Heart right ventricle (tissue), 16 donors: ENCODE measurements at regions of chr9 and their contacts with region 1.

Region 1: GRCh38 chr9:3962971-3963642 is 336.8 kb downstream of the GLIS3 start:
- DNase-seq: peak in 1 of 2 donors; percentile 44
- ATAC-seq: peak in 7 of 8 donors; percentile 51 to 87 (median 64)
- H3K4me3 ChIP-seq: peak overlapping the region in 1 of 10 donors; percentile 11
- H3K27ac ChIP-seq: peak overlapping the region in 2 of 10 donors; percentile 35 to 40
- H3K4me1 ChIP-seq: peaks cover 0 to 23% (median 11%) of the 10 kb centered on the region in 9 donors
- H3K27me3 ChIP-seq: no peaks in the 10 kb centered on the region
- CTCF ChIP-seq: no peak

Region 2: DNA sequence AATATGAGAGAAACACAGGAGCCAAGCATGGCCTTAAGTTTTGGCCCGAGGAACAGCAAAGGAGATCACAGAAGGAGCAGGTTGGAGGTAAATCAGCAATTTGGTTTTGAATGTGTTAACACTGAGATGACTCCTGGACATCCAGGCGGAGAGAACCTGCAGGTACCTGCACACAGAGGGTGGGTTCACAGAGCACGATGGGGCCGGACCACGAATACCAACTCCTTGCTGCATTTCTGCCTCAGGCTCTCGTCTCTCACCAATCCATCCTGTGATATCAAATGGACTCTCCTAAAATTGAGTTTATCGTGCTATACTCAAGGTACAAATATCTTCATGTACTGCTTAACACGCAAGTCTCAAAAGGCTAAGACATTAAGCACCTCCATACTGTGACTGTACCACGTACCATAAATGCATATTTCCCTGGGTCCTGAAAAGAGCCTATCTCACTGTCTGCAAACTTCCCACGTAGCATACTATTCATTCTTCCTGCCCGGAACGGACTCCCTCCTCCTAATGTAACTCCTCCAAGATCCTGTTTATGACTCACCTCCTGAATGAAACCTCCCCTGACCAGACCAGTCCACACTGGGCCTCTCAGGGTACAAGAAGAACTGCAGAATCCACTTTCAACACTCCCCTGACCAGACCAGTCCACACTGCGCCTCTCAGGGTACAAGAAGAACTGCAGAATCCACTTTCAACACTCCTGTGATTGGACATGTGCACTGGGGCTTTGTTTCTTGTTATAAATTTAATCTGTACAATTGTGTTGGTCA is 56.5 kb before region 1 on chr9:
- intact Hi-C with region 1: no loop called
- DNase-seq: no peak
- ATAC-seq: peak in 7 of 8 donors; percentile 42 to 88 (median 69)
- H3K4me3 ChIP-seq: no peak overlapping the region
- H3K27ac ChIP-seq: peak overlapping the region in 1 of 10 donors; percentile 33
- H3K4me1 ChIP-seq: peaks cover 0 to 33% (median 0%) of the 10 kb centered on the region in 9 donors
- H3K27me3 ChIP-seq: no peaks in the 10 kb centered on the region
- CTCF ChIP-seq: no peak

Region 3: GRCh38 chr9:3924145-3924544 is 39.0 kb before region 1 on chr9:
- intact Hi-C with region 1: loop called in 1 of 10 experiments (anchors 2 kb)
- DNase-seq: no peak
- ATAC-seq: no peak
- H3K4me3 ChIP-seq: no peak overlapping the region
- H3K27ac ChIP-seq: no peak overlapping the region
- H3K4me1 ChIP-seq: peaks cover 0 to 9% (median 0%) of the 10 kb centered on the region in 9 donors
- H3K27me3 ChIP-seq: no peaks in the 10 kb centered on the region
- CTCF ChIP-seq: no peak